Gastrocnemius medialis (tissue), 4 donors: ENCODE measurements at regions of chr4 and their contacts with region 1.

Region 1: GRCh38 chr4:119041951-119042560 is 93.6 kb upstream of the MYOZ2 start:
- DNase-seq: peak; percentile 63 to 82
- ATAC-seq: peak; percentile 53 to 55
- H3K4me3 ChIP-seq: peak overlapping the region in 2 of 4 donors; percentile 14 to 20
- H3K27ac ChIP-seq: peak overlapping the region; percentile 94 to 98 (median 96)
- H3K4me1 ChIP-seq: peaks cover 64 to 77% of the 10 kb centered on the region in 2 donors
- H3K27me3 ChIP-seq: no peaks in the 10 kb centered on the region
- CTCF ChIP-seq: peak; percentile 72 to 80 (median 77)
- POLR2A ChIP-seq: peak in 1 of 2 donors; percentile 42

Region 2: GRCh38 chr4:118740869-118741268 is 301.2 kb before region 1 on chr4:
- in situ Hi-C with region 1: no loop called
- intact Hi-C with region 1: loop called (anchors 5 kb)
- DNase-seq: no peak
- ATAC-seq: no peak
- H3K4me3 ChIP-seq: peak overlapping the region; percentile 15 to 33 (median 20)
- H3K27ac ChIP-seq: peak overlapping the region; percentile 30 to 63 (median 43)
- H3K4me1 ChIP-seq: peaks cover 14 to 25% of the 10 kb centered on the region in 2 donors
- H3K27me3 ChIP-seq: no peaks in the 10 kb centered on the region
- CTCF ChIP-seq: peak; percentile 31 to 60 (median 51)
- POLR2A ChIP-seq: no peak

Region 3: GRCh38 chr4:118981839-118982381 is 60.1 kb before region 1 on chr4:
- in situ Hi-C with region 1: no loop called
- intact Hi-C with region 1: loop called (anchors 2 kb)
- DNase-seq: peak; percentile 49 to 68
- ATAC-seq: peak; percentile 64 to 68
- H3K4me3 ChIP-seq: peak overlapping the region in 3 of 4 donors; percentile 1 to 37 (median 15)
- H3K27ac ChIP-seq: peak overlapping the region; percentile 87 to 99 (median 91)
- H3K4me1 ChIP-seq: peaks cover 65 to 75% of the 10 kb centered on the region in 2 donors
- H3K27me3 ChIP-seq: no peaks in the 10 kb centered on the region
- CTCF ChIP-seq: peak; percentile 82 to 92 (median 84)
- POLR2A ChIP-seq: no peak

Region 4: GRCh38 chr4:119103263-119103662 is 61.2 kb after region 1 on chr4:
- in situ Hi-C with region 1: no loop called
- intact Hi-C with region 1: loop called (anchors 2 kb)
- DNase-seq: peak in 1 of 2 donors; percentile 45
- ATAC-seq: peak; percentile 69 to 75
- H3K4me3 ChIP-seq: no peak overlapping the region
- H3K27ac ChIP-seq: peak overlapping the region; percentile 49 to 73 (median 69)
- H3K4me1 ChIP-seq: peaks cover 46 to 54% of the 10 kb centered on the region in 2 donors
- H3K27me3 ChIP-seq: no peaks in the 10 kb centered on the region
- CTCF ChIP-seq: no peak
- POLR2A ChIP-seq: no peak

Region 5: GRCh38 chr4:119212234-119212963 is 170.3 kb after region 1 on chr4 and contains the start of gene USP53:
- in situ Hi-C with region 1: loop called (anchors 5 to 25 kb)
- intact Hi-C with region 1: loop called (anchors 1 kb)
- DNase-seq: peak; percentile 99
- ATAC-seq: peak; percentile 85 to 88
- H3K4me3 ChIP-seq: peak within 1 kb of the TSS; percentile 79 to 96 (median 88)
- H3K27ac ChIP-seq: peak within 1 kb of the TSS; percentile 95 to 99 (median 98)
- H3K4me1 ChIP-seq: peaks cover 28% of the 10 kb centered on the region in 2 donors
- H3K27me3 ChIP-seq: no peaks in the 10 kb centered on the region
- CTCF ChIP-seq: peak in 2 of 5 experiments; percentile 18 to 51
- POLR2A ChIP-seq: peak; percentile 97 to 99
- total RNA-seq, gene USP53: 56.9 to 190 (median 98.5) TPM

Region 6: DNA sequence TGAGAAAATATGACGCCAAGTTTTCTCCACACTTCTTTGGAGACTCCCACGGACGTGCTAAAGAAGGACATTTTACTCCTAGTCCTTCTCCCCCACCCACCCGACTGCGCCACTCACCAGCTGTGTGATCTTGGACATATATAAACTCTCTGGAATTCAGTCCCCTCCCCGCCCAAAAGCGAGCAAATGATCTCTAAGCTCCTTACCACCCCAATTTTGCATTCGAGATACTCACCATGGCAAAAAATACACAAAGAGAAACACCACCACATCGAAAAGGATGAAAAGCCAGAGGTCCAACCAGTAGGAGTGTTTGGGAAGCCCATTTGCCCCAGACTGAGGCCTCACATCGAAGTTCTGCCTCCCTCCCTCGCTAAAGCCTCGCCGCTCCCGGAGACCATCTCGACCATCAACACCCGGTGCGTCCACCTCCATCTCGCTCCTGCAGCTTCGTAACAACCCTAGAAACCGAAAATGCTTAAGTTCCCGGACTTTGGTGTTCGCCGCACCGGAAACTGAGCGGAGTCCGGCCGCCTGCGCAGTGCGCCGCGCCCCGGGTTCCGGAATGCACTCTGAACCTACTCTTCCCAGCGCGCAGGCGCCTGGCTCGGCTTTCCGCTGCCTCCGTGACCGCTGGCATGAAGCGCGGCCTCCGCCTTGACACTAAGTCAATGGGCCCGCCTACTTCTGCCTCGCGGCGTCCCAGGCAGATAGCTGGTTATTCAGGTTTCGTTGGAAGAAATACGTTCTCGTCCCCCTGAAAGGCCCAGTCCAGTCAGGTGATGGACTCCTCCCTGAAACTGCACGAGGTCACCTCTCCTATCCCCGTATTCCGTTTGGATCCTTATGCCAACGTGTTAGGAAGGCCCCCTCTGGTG is 258.3 kb after region 1 on chr4:
- in situ Hi-C with region 1: loop called (anchors 5 to 10 kb)
- intact Hi-C with region 1: no loop called
- DNase-seq: peak; percentile 85 to 93
- ATAC-seq: peak; percentile 74 to 86
- H3K4me3 ChIP-seq: peak overlapping the region; percentile 69 to 87 (median 81)
- H3K27ac ChIP-seq: peak overlapping the region; percentile 78 to 94 (median 88)
- H3K4me1 ChIP-seq: peaks cover 25 to 33% of the 10 kb centered on the region in 2 donors
- H3K27me3 ChIP-seq: no peaks in the 10 kb centered on the region
- CTCF ChIP-seq: peak in 2 of 5 experiments; percentile 13 to 14
- POLR2A ChIP-seq: peak; percentile 74 to 75